ENCODE measurements at regions of chr3 and their contacts with region 1.

Region 1: DNA sequence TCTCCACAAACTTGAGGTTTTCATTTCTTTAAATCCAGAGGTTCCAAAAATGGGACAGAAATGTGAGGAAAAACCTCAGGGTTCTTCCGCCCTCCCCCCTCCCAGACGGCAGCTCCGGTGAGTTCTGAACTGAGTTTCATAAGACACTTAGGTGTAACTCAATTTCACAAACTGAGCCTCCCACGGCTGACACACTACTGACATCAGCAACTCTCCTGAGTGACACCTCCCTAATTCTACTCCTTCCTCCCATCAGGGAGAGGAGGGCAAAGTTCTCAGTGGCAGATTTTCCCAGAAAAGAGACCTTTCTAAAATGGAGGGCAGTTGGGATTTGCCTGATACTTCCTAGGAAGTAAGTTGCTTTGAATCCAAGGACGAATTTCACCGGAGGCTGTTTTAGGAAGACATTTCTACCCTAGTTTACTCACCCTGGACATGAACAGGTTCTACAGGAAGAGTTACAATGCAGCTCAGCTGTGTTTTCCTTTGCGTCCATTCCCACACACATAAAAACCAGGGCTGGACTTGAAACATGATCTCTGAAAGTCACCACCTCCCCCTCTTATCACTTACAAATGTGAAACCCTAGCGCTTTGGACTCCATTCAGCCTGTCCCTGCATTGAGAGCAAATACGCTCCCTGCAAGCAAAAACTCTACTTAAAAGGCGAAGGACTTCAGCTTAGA is 78.1 kb upstream of the LMOD3 start:
- DNase-seq: peak in 2 of 5 donors; percentile 18 to 39
- ATAC-seq: peak; percentile 65 to 79 (median 78)
- H3K4me3 ChIP-seq: peak overlapping the region in 10 of 12 donors; percentile 5 to 51 (median 40)
- H3K27ac ChIP-seq: peak overlapping the region in 10 of 12 donors; percentile 8 to 67 (median 52)
- H3K4me1 ChIP-seq: peaks cover 0 to 32% (median 11%) of the 10 kb centered on the region in 12 donors
- H3K27me3 ChIP-seq: no peaks in the 10 kb centered on the region
- CTCF ChIP-seq: no peak
- POLR2A ChIP-seq: no peak

Region 2: GRCh38 chr3:69250014-69250413 is 49.5 kb after region 1 on chr3:
- intact Hi-C with region 1: loop called in 1 of 10 experiments (anchors 10 kb)
- DNase-seq: peak in 3 of 5 donors; percentile 23 to 60 (median 44)
- ATAC-seq: peak; percentile 20 to 81 (median 58)
- H3K4me3 ChIP-seq: peak overlapping the region in 8 of 12 donors; percentile 0 to 47 (median 24)
- H3K27ac ChIP-seq: no peak overlapping the region
- H3K4me1 ChIP-seq: no peaks in the 10 kb centered on the region
- H3K27me3 ChIP-seq: no peaks in the 10 kb centered on the region
- CTCF ChIP-seq: no peak
- POLR2A ChIP-seq: no peak

Measured in heart left ventricle (tissue), 16 donors.